Dendritic cell treated with granulocyte-macrophage colony-stimulating factor and Interleukin-4, amounts not matched to agents 40 ng/mL and 50 ng/mL, for 4 days (primary cell): ENCODE measurements at regions of chr7 and their contacts with region 1.

Region 1: GRCh38 chr7:23205909-23206767 is 24.3 kb downstream of the NUP42 start:
- H3K4me3 Mint-ChIP-seq: peak overlapping the region; percentile 57
- H3K27ac Mint-ChIP-seq: peak overlapping the region; percentile 82
- H3K4me1 Mint-ChIP-seq: peaks cover 41% of the 10 kb centered on the region
- H3K27me3 Mint-ChIP-seq: peaks cover 18% of the 10 kb centered on the region

Region 2: DNA sequence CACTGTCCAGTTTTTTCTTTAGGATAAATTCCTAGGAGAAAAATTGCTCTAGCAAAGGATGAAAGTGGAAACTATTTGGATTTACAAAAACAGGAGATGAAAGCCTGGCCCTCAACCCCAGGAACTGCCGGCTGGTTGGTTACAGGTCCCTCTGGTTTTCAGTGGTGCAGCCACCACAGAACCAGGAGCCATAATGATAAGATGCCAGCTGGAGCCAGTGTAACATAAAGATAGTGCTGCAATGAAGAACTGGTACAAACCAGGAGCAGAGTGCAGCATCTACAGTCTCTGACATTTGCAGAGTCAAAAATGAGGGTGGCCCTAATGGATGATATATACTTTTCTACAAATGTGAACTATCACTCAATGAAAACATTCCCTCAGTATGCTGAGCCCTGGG is 44.7 kb before region 1 on chr7:
- intact Hi-C with region 1: no loop called
- H3K4me3 Mint-ChIP-seq: no peak overlapping the region
- H3K27ac Mint-ChIP-seq: no peak overlapping the region
- H3K4me1 Mint-ChIP-seq: no peaks in the 10 kb centered on the region
- H3K27me3 Mint-ChIP-seq: no peaks in the 10 kb centered on the region

Region 3: DNA sequence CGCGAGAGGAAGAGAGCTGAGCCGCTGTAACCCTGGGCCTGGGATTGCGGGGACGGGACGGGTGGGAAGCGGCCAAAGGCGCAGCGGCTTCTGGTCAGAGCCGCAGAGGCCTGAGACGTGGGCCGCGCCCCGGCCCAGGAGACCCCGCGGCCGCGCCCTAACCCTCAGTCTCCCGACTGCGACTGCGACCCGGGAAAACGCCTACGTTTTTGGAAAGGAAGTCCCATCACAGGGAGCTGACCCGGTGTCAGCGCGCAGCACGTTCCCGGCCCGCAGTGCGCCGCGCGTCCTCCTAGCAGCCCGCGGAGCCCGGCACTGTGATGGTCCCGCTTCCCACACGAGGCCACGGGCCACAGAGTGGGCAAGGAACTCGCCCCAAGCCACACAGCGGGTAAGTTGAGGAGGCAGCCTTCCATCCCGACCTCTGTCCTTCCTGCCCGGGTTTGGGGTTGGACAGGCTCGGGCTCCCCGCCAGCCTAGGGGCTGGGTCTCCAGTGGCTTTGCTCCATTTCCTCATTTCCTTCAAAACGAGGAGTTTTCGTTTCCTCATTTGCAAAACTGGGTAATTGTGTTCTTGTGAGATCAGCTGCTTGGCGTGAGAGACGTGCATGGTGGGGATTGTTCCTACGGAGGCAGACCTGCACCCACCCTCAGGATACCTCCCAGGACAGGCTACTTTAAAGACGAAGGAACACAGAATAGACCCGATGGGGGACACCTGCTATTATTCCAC is 41.6 kb after region 1 on chr7:
- intact Hi-C with region 1: loop called (anchors 5 kb)
- H3K4me3 Mint-ChIP-seq: peak overlapping the region; percentile 82
- H3K27ac Mint-ChIP-seq: peak overlapping the region; percentile 95
- H3K4me1 Mint-ChIP-seq: peaks cover 42% of the 10 kb centered on the region
- H3K27me3 Mint-ChIP-seq: peaks cover 11% of the 10 kb centered on the region